ENCODE measurements at regions of chr10 and their contacts with region 1.

Region 1: GRCh38 chr10:88880282-88881076 is 434 bp downstream of the STAMBPL1 start:
- DNase-seq: peak; percentile 91
- H3K4me3 ChIP-seq: peak overlapping the region; percentile 80
- H3K27ac ChIP-seq: peak overlapping the region; percentile 93
- H3K4me1 ChIP-seq: peaks cover 64% of the 10 kb centered on the region
- CTCF ChIP-seq: peak; percentile 43; the same call in 1 of the 2 replicates

Region 2: DNA sequence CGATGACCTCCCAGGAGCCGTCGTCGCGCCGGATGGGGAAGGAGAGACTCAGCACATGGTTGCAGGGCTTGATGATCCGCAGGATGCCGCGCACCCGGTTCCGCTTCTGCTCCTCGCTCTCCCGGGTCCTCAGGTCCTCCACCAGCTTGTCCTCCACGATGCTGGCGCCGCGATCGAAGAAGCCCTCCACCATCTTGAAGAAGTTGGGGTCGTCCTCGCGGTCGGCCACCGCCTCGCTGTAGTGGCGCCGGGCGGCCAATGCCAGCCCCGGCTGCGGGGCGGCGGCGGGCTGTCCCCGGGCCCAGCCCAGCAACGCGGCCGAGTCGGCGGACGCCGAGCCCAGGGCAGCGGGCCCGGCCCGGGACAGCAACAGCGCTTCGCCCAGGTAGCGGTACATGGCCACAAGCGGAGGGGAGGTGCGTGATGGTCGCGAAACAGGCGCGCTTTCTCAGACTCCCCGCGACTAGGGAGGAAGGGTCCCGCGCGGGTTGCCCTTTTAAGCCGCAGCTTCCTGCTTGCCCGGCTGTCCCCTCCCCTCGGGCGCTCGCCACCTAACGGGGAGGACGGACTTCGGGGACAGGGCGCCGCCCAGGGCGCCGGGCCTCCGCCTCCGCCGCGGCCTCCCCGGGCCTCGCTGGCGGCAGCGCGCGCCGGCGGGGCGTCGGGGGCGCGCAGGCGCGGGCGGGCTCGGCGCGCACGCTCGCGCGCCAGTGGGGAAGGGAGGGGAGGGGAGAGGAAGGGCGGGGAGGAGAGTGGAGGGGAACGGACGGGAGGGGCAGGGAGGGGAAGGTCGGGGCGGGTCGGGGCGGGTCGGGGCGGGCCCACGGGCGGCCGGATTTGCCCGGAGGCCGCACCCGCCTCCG is 1785.9 kb before region 1 on chr10 and contains the starts of genes GLUD1 and SHLD2:
- CTCF ChIA-PET with region 1: no interaction called
- POLR2A ChIA-PET with region 1: no interaction called
- intact Hi-C with region 1: loop called (anchors 10 kb)
- DNase-seq: peak; percentile 94
- H3K4me3 ChIP-seq: peak within 1 kb of the TSS; percentile 92
- H3K27ac ChIP-seq: peak within 1 kb of the TSS; percentile 80
- H3K4me1 ChIP-seq: peaks cover 44% of the 10 kb centered on the region
- CTCF ChIP-seq: no peak
- total RNA-seq, gene GLUD1: 86.5 and 98.5 TPM in 2 replicates
- total RNA-seq, gene SHLD2: 32.8 and 34.3 TPM in 2 replicates

Region 3: GRCh38 chr10:88114368-88114767 is 766.1 kb before region 1 on chr10:
- CTCF ChIA-PET with region 1: no interaction called
- POLR2A ChIA-PET with region 1: no interaction called
- intact Hi-C with region 1: loop called (anchors 10 kb)
- DNase-seq: peak; percentile 90
- H3K4me3 ChIP-seq: peak overlapping the region; percentile 33
- H3K27ac ChIP-seq: peak overlapping the region; percentile 83
- H3K4me1 ChIP-seq: peaks cover 98% of the 10 kb centered on the region
- CTCF ChIP-seq: peak; percentile 89

Region 4: DNA sequence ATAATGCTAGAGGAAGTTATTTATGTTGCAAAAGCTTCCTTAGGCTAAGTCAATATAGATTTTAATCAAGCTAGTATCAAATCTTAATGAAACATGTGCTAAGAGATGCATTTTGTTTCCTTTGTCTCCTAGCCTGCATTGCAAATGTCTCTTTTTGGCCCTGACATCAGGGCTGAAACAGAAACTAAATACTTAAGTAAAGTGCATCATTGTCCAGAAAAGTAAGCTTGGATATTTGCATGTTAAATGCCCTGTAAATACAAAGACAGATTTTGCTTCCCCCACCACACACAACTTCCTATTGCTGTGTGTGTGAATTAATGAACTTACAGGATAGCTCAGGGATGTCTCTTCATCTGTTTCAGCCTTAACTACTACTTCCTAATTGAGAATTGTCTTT is 10.4 kb before region 1 on chr10:
- CTCF ChIA-PET with region 1: no interaction called
- POLR2A ChIA-PET with region 1: interaction called, 10 read pairs
- intact Hi-C with region 1: no loop called
- DNase-seq: no peak
- H3K4me3 ChIP-seq: no peak overlapping the region
- H3K27ac ChIP-seq: no peak overlapping the region
- H3K4me1 ChIP-seq: no peaks in the 10 kb centered on the region
- CTCF ChIP-seq: no peak

Region 5: GRCh38 chr10:88901206-88901983 is 20.9 kb after region 1 on chr10:
- CTCF ChIA-PET with region 1: interaction called, 3 read pairs
- POLR2A ChIA-PET with region 1: interaction called, 201 read pairs
- intact Hi-C with region 1: loop called (anchors 1 kb)
- DNase-seq: peak; percentile 80
- H3K4me3 ChIP-seq: peak overlapping the region; percentile 45
- H3K27ac ChIP-seq: peak overlapping the region; percentile 92
- H3K4me1 ChIP-seq: peaks cover 57% of the 10 kb centered on the region
- CTCF ChIP-seq: no peak

Region 6: DNA sequence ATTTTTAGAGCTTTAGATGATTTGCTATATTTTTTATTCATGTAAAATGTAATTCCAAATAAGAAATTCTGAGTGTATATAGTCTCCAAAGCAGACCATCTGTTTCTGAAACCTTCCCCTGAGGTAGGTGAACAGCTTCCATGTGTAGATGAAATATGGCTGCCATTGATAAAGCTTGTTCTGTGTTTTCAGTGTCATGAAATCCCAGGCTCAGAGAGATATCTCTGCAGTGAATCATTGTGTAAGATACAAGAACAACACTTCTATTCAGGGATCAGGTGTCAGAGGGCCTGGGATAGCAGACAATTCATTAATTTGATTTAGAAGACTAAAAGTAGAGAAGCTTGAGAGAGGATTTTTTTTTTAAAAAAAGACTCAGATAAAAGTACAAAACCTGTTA is 43.0 kb after region 1 on chr10:
- CTCF ChIA-PET with region 1: no interaction called
- POLR2A ChIA-PET with region 1: no interaction called
- intact Hi-C with region 1: no loop called
- DNase-seq: no peak
- H3K4me3 ChIP-seq: no peak overlapping the region
- H3K27ac ChIP-seq: no peak overlapping the region
- H3K4me1 ChIP-seq: no peaks in the 10 kb centered on the region
- CTCF ChIP-seq: no peak

Region 7: GRCh38 chr10:89001024-89001728 is 120.7 kb after region 1 on chr10:
- CTCF ChIA-PET with region 1: no interaction called
- POLR2A ChIA-PET with region 1: interaction called, 8 read pairs
- intact Hi-C with region 1: loop called (anchors 2 kb)
- DNase-seq: peak; percentile 23
- H3K4me3 ChIP-seq: peak overlapping the region; percentile 63
- H3K27ac ChIP-seq: peak overlapping the region; percentile 48
- H3K4me1 ChIP-seq: peaks cover 70% of the 10 kb centered on the region
- CTCF ChIP-seq: no peak

Measured in OCI-LY7 (cell line).